Activated naive CD8-positive, alpha-beta T cell treated with anti-CD3 and anti-CD28 coated beads, Interleukin-2, amount 10 ng/mL, durations not matched to agents 7 days and 5 days (primary cell): ENCODE measurements at regions of chr22 and their contacts with region 1.

Region 1: GRCh38 chr22:50250555-50251476 is at the start of gene HDAC10:
- DNase-seq: peak; percentile 90
- ATAC-seq: peak; percentile 83
- H3K4me3 Mint-ChIP-seq: peak within 1 kb of the TSS; percentile 87
- H3K27ac Mint-ChIP-seq: peak within 1 kb of the TSS; percentile 84
- H3K4me1 Mint-ChIP-seq: peaks cover 7% of the 10 kb centered on the region
- H3K27me3 Mint-ChIP-seq: no peaks in the 10 kb centered on the region
- total RNA-seq, gene HDAC10: 99.1 to 111 TPM

Region 2: DNA sequence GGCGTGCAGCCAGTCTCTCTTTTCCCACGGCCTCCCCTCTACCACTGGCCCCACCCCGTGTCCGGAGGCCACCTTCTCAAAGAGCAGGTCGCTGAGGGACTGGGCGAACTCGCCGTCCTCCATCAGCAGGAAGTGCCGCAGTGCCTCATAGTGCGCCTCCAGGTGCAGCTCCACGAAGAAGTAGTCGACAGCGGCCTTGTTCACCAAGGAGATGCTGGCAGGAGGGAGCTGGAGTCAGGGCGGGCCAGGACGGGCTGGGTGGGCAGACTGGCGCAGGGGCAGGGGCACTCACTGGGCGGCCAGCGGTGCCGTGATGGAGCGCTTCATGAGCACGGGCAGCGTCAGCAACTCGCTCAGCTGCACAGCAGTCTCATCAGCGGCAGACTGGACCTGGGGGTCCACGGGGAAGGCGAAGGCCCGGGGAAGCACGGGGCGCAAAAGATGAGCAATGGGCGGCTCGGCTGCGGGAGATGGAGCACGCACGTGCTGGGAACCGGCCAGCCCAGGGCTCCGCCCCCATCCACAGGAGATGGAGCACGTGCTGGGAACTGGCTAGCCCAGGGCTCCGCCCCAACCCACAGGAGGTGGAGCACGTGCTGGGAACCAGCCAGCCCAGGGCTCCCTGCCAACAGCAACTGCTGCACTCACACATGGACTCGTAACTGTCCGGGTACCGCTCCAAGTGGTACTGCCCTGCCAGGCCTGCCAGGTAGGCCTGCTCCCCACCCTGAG is 31.7 kb before region 1 on chr22:
- POLR2A ChIA-PET with region 1: no interaction called
- DNase-seq: no peak
- ATAC-seq: no peak
- H3K4me3 Mint-ChIP-seq: no peak overlapping the region
- H3K27ac Mint-ChIP-seq: no peak overlapping the region
- H3K4me1 Mint-ChIP-seq: no peaks in the 10 kb centered on the region
- H3K27me3 Mint-ChIP-seq: no peaks in the 10 kb centered on the region

Region 3: GRCh38 chr22:50260801-50261614 is 10.2 kb after region 1 on chr22:
- POLR2A ChIA-PET with region 1: interaction called, 26 read pairs
- DNase-seq: peak; percentile 67
- ATAC-seq: peak; percentile 35
- H3K4me3 Mint-ChIP-seq: no peak overlapping the region
- H3K27ac Mint-ChIP-seq: no peak overlapping the region
- H3K4me1 Mint-ChIP-seq: peaks cover 4% of the 10 kb centered on the region
- H3K27me3 Mint-ChIP-seq: peaks cover 11% of the 10 kb centered on the region